Heart right ventricle (tissue), 16 donors: ENCODE measurements at regions of chr3 and their contacts with region 1.

Region 1: DNA sequence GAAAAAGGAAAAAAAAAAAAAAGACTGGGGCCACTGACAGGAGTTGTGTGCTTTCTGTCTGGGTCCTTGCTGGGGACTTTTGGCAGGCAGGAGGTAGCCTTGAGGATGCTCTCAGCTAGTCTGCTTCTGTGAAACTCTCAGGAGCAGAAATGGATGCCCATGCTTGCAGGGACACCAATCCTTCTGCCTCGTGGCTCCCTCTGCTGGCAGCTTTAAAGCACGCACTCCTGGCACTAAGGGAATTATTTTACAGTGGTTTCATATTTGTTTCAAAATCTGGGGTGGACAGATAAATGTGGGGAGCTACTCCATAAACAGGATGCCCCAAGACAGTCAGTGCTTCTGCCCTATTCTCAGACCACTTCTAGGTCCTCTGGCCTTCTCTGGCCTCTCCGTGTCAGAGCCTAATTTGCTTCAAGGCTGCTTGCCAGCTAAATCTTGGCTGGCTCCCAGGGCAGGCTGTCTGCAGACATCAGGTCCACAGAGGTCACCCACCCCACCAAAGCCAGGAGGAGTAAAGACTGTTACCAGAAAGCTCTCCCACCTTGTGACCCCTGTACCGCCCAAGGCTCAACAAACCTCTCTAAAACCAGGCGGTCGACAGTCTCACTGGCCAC is 17.1 kb downstream of the TRAIP start:
- DNase-seq: peak; percentile 82 to 84
- ATAC-seq: peak; percentile 76 to 91 (median 84)
- H3K4me3 ChIP-seq: no peak overlapping the region
- H3K27ac ChIP-seq: peak overlapping the region in 8 of 10 donors; percentile 39 to 70 (median 58)
- H3K4me1 ChIP-seq: peaks cover 12 to 43% (median 28%) of the 10 kb centered on the region in 9 donors
- H3K27me3 ChIP-seq: no peaks in the 10 kb centered on the region
- CTCF ChIP-seq: peak; percentile 85 to 95 (median 91)

Region 2: GRCh38 chr3:49703443-49703927 is 135.8 kb before region 1 on chr3:
- intact Hi-C with region 1: loop called in 5 of 10 experiments (anchors 2 to 10 kb)
- DNase-seq: peak; percentile 44
- ATAC-seq: peak; percentile 61 to 76 (median 67)
- H3K4me3 ChIP-seq: no peak overlapping the region
- H3K27ac ChIP-seq: no peak overlapping the region
- H3K4me1 ChIP-seq: peaks cover 0 to 23% (median 0%) of the 10 kb centered on the region in 9 donors
- H3K27me3 ChIP-seq: no peaks in the 10 kb centered on the region
- CTCF ChIP-seq: peak; percentile 47 to 85 (median 80)

Region 3: DNA sequence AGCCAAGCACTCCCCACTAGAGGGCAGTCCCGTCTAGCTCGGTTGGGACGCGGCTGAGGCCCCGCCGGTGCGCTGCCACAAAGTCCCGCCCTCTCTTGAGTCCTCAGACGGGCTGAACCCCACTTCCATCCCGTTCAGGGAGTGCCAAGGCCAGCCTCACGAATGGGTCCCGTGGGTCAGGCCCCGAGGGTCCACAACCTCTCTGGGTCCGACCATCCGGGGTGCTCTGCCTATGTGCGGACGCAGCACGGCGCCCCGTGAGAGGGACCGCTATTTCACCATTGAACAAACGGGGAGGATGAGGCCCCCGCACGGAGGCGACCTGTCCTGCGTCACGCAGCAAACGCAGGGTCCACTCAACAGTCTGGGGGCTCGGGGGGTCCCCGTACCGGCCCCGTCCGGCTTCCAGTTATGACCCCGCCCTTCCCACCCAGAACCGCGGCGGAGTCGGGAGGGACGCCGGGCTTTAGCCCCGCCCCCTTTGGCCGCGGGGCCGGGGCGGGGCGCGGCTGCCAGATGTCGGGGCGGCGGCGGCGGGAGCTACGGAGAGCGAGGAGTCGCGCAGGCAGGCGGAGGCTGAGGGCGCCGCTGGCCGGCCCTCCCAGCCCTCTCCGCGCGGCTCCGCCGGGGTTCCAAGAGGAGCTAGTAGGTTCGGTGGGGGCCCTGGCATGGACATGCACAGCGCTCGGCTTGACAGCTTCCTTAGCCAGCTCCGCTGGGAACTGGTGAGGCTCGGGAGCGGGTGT is 36.4 kb before region 1 on chr3 and contains the start of gene INKA1:
- intact Hi-C with region 1: loop called (anchors 1 to 5 kb)
- DNase-seq: peak; percentile 90 to 94
- ATAC-seq: peak; percentile 78 to 87 (median 83)
- H3K4me3 ChIP-seq: peak within 1 kb of the TSS; percentile 55 to 99 (median 89)
- H3K27ac ChIP-seq: peak within 1 kb of the TSS; percentile 68 to 99 (median 97)
- H3K4me1 ChIP-seq: peaks cover 34 to 52% (median 45%) of the 10 kb centered on the region in 9 donors
- H3K27me3 ChIP-seq: no peaks in the 10 kb centered on the region
- CTCF ChIP-seq: peak; percentile 89 to 97 (median 92)
- total RNA-seq, gene INKA1: 1.8 to 5.7 (median 2.5) TPM